ENCODE measurements at regions of chr3 and their contacts with region 1.

Region 1: DNA sequence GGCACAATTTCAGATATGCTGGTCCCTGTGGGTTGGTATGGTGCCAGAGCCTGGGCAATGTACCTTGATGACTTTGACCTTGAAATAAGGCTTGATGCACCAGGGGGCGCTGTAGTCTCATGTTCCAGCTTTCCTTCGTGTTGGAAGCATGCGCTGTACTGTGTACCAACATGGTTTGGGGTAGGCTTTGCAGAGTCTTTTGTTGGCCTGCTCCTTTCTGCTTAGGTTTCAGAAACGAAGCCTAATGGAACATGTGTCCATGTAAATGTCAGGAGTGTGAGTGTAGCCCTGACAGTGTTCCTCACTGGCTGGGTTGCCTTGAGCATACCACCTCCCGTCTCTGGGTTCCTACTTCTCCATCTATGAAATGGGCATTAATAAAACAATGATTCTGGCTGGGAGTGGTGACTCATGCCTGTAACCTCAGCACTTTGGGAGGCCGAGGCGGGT is 3.6 kb upstream of the CCR4 start:
- DNase-seq: peak; percentile 74 to 79
- H3K4me3 ChIP-seq: no peak overlapping the region
- H3K27ac ChIP-seq: no peak overlapping the region
- H3K4me1 ChIP-seq: no peaks in the 10 kb centered on the region
- H3K27me3 ChIP-seq: no peaks in the 10 kb centered on the region
- CTCF ChIP-seq: peak; percentile 64 to 66

Region 2: DNA sequence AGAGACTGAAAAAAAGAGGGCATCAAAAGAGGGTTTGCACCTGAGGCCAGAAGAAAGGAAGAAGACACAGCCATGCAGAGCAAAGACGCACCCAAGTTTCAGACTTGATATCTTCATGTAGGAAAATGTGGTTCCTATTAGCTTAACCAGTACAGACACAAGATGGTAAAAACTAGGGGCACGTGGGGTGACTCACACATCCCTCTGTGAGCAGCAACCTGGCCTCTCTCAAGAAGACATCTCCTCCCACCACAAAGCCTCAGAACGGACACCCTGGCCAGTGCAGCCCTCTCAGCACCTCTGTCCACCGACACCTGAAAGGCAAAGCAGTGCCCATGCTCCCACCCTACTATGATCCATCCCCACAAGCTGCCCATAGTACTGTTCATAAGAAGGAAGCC is 115.8 kb after region 1 on chr3:
- intact Hi-C with region 1: loop called (anchors 10 kb)
- DNase-seq: no peak
- H3K4me3 ChIP-seq: no peak overlapping the region
- H3K27ac ChIP-seq: no peak overlapping the region
- H3K4me1 ChIP-seq: no peaks in the 10 kb centered on the region
- H3K27me3 ChIP-seq: no peaks in the 10 kb centered on the region
- CTCF ChIP-seq: no peak

Measured in tibial artery (tissue), 4 donors.